ENCODE measurements at regions of chr1 and their contacts with region 1.

Region 1: DNA sequence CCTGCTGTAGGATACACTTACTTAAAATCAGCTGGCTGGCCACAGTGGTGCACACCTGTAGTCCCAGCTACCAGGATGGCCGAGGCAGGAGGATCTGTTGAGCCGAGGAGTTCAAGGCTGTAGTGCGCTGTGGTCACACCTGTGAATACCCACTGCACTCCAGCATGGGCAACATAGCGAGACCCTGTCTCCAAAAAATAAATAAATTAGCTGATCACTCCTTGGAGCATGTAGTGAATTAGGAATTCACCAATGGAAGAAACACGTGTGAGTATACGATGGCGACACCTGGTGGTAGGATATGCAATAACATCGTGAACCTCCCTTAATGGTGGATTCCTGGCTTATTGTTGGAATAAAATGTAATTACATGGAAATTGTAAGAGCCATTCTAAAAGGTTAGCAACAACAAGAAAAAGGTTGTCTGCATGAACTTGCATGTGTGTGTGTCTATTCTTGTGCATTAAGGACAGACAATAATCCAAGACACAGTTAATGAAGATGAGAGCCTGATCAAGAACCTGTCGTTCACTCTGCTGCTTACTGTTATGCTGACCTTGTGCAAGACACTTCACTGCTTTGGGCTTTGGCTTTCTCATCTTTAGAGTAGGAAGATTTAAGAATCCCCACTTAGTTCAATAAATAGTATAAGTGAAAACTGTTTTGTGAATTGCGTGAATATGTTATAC is 38.6 kb upstream of the COX20 start:
- DNase-seq: peak in 1 of 3 donors; percentile 63
- ATAC-seq: peak; percentile 65 to 67
- H3K4me3 ChIP-seq: no peak overlapping the region
- H3K27ac ChIP-seq: no peak overlapping the region
- H3K4me1 ChIP-seq: no peaks in the 10 kb centered on the region
- H3K27me3 ChIP-seq: no peaks in the 10 kb centered on the region

Region 2: GRCh38 chr1:244605835-244606370 is 191.0 kb before region 1 on chr1:
- intact Hi-C with region 1: loop called (anchors 2 to 5 kb)
- DNase-seq: no peak
- ATAC-seq: no peak
- H3K4me3 ChIP-seq: no peak overlapping the region
- H3K27ac ChIP-seq: no peak overlapping the region
- H3K4me1 ChIP-seq: no peaks in the 10 kb centered on the region
- H3K27me3 ChIP-seq: no peaks in the 10 kb centered on the region